ENCODE measurements at regions of chrX and their contacts with region 1.

Region 1: GRCh38 chrX:107776649-107777535 is 641 bp upstream of the NCBP2L start:
- DNase-seq: peak; percentile 62
- H3K4me3 ChIP-seq: peak overlapping the region; percentile 50
- H3K27ac ChIP-seq: no peak overlapping the region
- H3K27me3 ChIP-seq: peaks cover 22% of the 10 kb centered on the region
- CTCF ChIP-seq: peak; percentile 60

Region 2: DNA sequence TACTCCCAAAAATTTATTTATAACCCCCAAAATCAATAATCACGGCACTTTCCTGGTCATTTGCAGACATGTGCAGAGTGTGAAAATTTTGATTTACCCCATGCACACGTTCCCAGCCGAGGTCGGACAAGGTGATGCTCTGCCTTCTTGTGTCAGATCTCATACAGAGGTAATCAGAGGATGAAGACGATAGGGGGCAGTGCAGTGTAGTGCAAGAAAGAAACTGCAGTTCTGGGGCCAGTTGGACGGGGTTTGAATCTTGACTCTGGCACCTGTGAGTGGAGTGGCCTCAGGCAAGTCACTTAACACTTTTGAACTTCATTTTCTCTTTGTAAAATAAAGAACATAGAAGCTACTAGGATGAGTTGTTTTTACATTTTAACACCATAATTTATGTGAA is 239.1 kb before region 1 on chrX:
- CTCF ChIA-PET with region 1: interaction called, 21 read pairs
- POLR2A ChIA-PET with region 1: no interaction called
- DNase-seq: no peak
- H3K4me3 ChIP-seq: no peak overlapping the region
- H3K27ac ChIP-seq: no peak overlapping the region
- H3K27me3 ChIP-seq: no peaks in the 10 kb centered on the region
- CTCF ChIP-seq: peak; percentile 60

Region 3: GRCh38 chrX:107672955-107673378 is 103.9 kb before region 1 on chrX:
- CTCF ChIA-PET with region 1: interaction called, 13 read pairs
- POLR2A ChIA-PET with region 1: no interaction called
- DNase-seq: no peak
- H3K4me3 ChIP-seq: no peak overlapping the region
- H3K27ac ChIP-seq: no peak overlapping the region
- H3K27me3 ChIP-seq: no peaks in the 10 kb centered on the region
- CTCF ChIP-seq: peak; percentile 64

Region 4: DNA sequence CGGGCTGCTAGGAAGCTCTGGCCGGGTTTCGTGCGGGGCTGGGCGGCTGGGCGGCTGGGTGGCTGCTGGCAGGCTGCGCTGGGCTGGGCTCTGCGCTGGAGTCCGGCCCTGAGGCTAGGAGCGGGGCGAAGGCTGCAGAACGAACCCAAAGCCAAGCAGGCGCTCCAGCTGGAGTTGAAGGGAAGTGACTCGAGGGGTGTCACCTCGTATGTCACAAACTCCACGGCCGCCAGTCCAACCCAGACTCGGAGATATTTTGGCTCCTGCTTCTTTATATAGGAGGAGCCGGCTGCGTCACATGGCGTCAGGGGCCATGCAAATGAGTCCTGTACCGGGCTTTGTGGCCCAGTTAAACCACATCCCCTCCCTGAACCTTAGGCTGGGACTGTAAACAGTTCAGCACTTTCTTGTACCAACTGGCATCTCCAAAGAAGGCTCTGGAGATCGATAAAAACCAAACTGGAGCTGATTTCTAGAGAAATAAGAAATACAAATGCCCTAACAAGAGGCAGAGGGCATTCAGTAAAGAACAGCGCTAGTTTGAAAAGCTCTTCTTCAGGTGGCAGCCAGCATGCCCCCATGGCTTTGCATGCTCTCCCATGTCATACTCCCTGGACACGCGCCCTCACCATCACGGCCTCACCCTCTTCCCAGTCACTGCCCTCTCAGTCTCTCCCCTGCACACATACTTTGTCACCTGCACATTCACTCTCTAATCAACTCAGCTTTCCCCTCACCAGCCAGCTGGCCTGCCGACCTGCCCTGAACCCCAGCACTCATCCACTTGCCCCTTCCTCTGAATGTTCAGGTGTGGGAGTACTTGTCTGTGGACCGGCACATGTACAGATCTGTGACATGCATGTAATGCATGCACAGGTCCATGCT is 59.8 kb before region 1 on chrX:
- CTCF ChIA-PET with region 1: interaction called, 13 read pairs
- POLR2A ChIA-PET with region 1: interaction called, 5 read pairs
- DNase-seq: no peak
- H3K4me3 ChIP-seq: peak overlapping the region; percentile 66
- H3K27ac ChIP-seq: peak overlapping the region; percentile 31
- H3K27me3 ChIP-seq: no peaks in the 10 kb centered on the region
- CTCF ChIP-seq: no peak

Region 5: DNA sequence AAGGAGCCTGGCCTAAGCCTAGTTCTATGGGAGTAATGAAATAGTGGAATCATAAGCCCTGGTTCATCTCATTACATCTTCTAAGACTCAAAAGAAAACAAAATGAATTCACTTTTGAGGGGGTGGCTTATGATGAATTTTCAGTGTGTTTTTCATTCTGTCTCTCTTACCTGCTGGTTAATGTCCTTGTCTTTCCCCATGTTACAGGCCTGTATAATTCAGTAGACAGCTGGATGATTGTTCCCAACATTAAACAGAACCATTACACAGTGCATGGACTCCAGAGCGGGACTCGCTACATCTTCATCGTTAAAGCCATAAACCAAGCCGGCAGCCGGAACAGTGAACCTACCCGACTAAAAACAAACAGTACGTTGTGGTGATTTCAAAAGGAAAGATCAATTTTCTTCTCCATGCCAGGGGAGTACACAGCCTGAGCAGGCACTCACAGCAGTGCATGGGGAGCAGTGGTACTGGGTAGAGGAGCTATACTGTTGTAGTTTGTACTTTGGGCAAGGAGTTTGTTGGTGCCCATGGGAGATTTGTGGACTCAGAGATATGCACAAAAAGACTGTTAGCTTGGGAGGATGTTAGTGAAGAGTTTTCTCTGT is 147.3 kb after region 1 on chrX:
- CTCF ChIA-PET with region 1: no interaction called
- POLR2A ChIA-PET with region 1: no interaction called
- DNase-seq: no peak
- H3K4me3 ChIP-seq: no peak overlapping the region
- H3K27ac ChIP-seq: no peak overlapping the region
- H3K27me3 ChIP-seq: no peaks in the 10 kb centered on the region
- CTCF ChIP-seq: no peak